ENCODE measurements at regions of chr18 and their contacts with region 1.

Region 1: DNA sequence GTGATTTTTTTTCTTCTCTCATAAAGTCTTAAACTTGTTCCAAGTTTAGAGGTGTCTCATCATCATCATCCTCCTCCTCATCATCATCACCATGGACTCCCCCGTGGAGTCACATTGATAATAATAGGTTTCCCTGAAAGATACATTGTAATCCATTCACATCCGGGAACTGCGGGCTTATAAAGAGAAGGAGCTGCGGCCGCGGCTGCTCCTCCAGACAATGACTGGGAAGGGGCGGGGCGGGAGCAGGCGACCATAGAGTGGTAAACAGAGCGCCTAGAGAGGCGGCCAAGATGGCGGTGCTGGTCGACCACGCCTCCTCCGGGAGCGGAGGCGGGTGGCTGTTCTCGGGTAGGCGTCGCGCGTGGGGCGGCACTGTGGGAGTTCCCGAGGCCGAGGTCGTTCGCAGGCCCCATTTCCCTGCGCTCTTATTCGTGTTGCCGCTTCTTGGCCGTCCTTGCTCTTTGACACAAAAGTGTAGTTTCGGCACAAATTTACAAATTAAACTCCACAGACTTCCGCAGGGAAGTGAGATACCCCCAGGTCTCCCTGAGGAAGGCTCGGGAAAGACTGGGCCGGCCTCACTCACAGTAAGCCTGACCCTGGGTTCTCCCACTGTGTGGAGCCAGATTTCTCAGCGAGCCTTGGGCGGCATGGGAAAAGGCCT is 1.8 kb upstream of the TCF4 start:
- DNase-seq: peak; percentile 95
- ATAC-seq: peak; percentile 87
- H3K4me3 ChIP-seq: peak overlapping the region; percentile 62 to 90 (median 71)
- H3K4me3 Mint-ChIP-seq: peak overlapping the region; percentile 89
- H3K27ac ChIP-seq: peak overlapping the region; percentile 77 to 82
- H3K27ac Mint-ChIP-seq: peak overlapping the region; percentile 92
- H3K4me1 ChIP-seq: peaks cover 20 to 21% of the 10 kb centered on the region in 2 donors
- H3K4me1 Mint-ChIP-seq: peaks cover 37% of the 10 kb centered on the region
- H3K27me3 ChIP-seq: peaks cover 0 to 6% (median 2%) of the 10 kb centered on the region in 4 experiments
- H3K27me3 Mint-ChIP-seq: peaks cover 15% of the 10 kb centered on the region
- CTCF ChIP-seq: no peak

Region 2: DNA sequence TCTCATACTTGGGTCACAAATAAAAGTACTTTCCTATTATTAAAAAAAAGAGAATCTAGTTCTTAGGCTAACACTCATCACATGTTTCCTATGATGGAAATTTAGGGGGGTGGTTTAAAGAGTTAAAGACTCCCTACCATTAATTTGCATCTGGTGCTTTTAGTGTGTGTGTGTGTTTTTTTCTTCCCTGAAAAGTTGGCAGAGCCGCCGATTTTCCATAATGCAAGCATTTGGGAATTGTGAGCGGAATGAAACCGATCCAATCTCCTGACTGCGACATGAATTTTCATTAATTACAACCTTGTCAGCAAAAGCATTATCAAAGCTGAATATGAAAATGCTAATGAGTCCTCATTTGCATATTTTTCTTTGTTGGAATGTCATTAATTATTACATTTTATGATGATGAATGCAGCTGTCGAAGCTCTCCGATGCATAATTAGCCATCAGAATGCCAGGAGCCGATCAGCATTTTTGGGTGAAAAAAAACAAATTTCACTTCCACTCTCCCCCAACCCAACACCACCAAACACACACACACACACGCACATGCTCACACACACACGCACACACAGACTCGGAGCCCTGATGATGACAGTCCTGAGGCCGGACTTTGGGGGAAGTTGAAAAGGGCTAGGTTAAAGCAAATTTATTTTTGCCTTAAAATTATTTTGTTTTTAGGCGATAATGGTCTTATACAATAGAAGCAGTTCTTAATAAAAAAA is 167.1 kb before region 1 on chr18:
- CTCF ChIA-PET with region 1: no interaction called
- POLR2A ChIA-PET with region 1: interaction called, 5 read pairs
- intact Hi-C with region 1: loop called (anchors 2 kb)
- DNase-seq: peak; percentile 58
- ATAC-seq: peak; percentile 22
- H3K4me3 ChIP-seq: peak overlapping the region in 4 of 5 experiments; percentile 32 to 59 (median 48)
- H3K4me3 Mint-ChIP-seq: peak overlapping the region; percentile 86
- H3K27ac ChIP-seq: peak overlapping the region in 1 of 2 donors; percentile 44
- H3K27ac Mint-ChIP-seq: peak overlapping the region; percentile 81
- H3K4me1 ChIP-seq: peaks cover 36 to 38% of the 10 kb centered on the region in 2 donors
- H3K4me1 Mint-ChIP-seq: peaks cover 54% of the 10 kb centered on the region
- H3K27me3 ChIP-seq: no peaks in the 10 kb centered on the region
- H3K27me3 Mint-ChIP-seq: peaks cover 14% of the 10 kb centered on the region
- CTCF ChIP-seq: no peak

Region 3: DNA sequence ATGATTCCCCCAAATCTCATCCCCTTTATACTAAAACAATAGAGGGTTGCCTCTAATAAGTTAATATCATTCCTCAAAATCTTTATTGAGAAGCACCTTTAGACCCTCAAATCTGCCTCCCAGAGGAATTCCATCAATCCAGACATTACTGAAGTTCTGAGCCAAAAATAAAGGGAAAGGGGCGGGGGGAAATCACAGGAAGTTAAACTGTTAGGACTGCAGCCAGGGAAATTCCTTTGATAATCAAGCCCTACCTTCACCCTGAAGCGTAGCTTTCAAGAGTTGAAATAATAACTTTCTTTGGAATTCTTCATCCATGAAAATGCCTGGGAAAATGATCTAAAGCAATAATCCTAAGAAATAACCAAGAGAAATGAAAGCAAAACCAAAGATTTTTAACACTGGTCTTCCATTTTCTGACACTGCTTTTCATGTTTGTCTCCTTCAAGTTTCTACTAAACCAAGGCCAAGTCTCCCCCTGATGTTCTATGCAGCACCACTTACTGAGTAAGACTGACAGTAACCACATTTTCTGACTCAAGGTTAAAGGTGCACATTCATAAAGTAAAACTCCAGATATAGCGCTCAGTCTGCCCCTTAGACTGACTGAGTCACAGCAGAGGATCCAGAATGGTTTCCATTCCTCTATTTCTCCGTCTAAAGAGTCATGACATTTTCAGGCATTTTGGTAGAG is 80.0 kb before region 1 on chr18:
- CTCF ChIA-PET with region 1: interaction called, 4 read pairs
- POLR2A ChIA-PET with region 1: no interaction called
- intact Hi-C with region 1: loop called (anchors 5 kb)
- DNase-seq: peak; percentile 49
- ATAC-seq: peak; percentile 22
- H3K4me3 ChIP-seq: peak overlapping the region; percentile 0 to 60 (median 43)
- H3K4me3 Mint-ChIP-seq: peak overlapping the region; percentile 82
- H3K27ac ChIP-seq: peak overlapping the region; percentile 65 to 85
- H3K27ac Mint-ChIP-seq: peak overlapping the region; percentile 89
- H3K4me1 ChIP-seq: peaks cover 24 to 27% of the 10 kb centered on the region in 2 donors
- H3K4me1 Mint-ChIP-seq: peaks cover 51% of the 10 kb centered on the region
- H3K27me3 ChIP-seq: no peaks in the 10 kb centered on the region
- H3K27me3 Mint-ChIP-seq: no peaks in the 10 kb centered on the region
- CTCF ChIP-seq: no peak

Region 4: GRCh38 chr18:55781481-55781957 is 191.8 kb after region 1 on chr18:
- CTCF ChIA-PET with region 1: no interaction called
- POLR2A ChIA-PET with region 1: interaction called, 3 read pairs
- intact Hi-C with region 1: loop called (anchors 1 kb)
- DNase-seq: peak; percentile 23
- ATAC-seq: no peak
- H3K4me3 ChIP-seq: no peak overlapping the region
- H3K4me3 Mint-ChIP-seq: peak overlapping the region; percentile 87
- H3K27ac ChIP-seq: peak overlapping the region in 1 of 2 donors; percentile 71
- H3K27ac Mint-ChIP-seq: peak overlapping the region; percentile 95
- H3K4me1 ChIP-seq: peaks cover 19 to 27% of the 10 kb centered on the region in 2 donors
- H3K4me1 Mint-ChIP-seq: peaks cover 36% of the 10 kb centered on the region
- H3K27me3 ChIP-seq: peaks cover 0 to 4% (median 0%) of the 10 kb centered on the region in 4 experiments
- H3K27me3 Mint-ChIP-seq: peaks cover 11% of the 10 kb centered on the region
- CTCF ChIP-seq: no peak

Region 5: GRCh38 chr18:56248610-56249235 is 659.0 kb after region 1 on chr18:
- CTCF ChIA-PET with region 1: no interaction called
- POLR2A ChIA-PET with region 1: interaction called, 5 read pairs
- intact Hi-C with region 1: loop called (anchors 5 kb)
- DNase-seq: peak; percentile 79
- ATAC-seq: peak; percentile 96
- H3K4me3 ChIP-seq: peak overlapping the region in 4 of 5 experiments; percentile 12 to 44 (median 14)
- H3K4me3 Mint-ChIP-seq: peak overlapping the region; percentile 60
- H3K27ac ChIP-seq: peak overlapping the region; percentile 56 to 77
- H3K27ac Mint-ChIP-seq: peak overlapping the region; percentile 82
- H3K4me1 ChIP-seq: peaks cover 35 to 52% of the 10 kb centered on the region in 2 donors
- H3K4me1 Mint-ChIP-seq: peaks cover 47% of the 10 kb centered on the region
- H3K27me3 ChIP-seq: no peaks in the 10 kb centered on the region
- H3K27me3 Mint-ChIP-seq: no peaks in the 10 kb centered on the region
- CTCF ChIP-seq: no peak

Region 6: GRCh38 chr18:56638271-56639093 is 1048.7 kb after region 1 on chr18 and contains the start of gene TXNL1:
- CTCF ChIA-PET with region 1: no interaction called
- POLR2A ChIA-PET with region 1: no interaction called
- intact Hi-C with region 1: loop called (anchors 5 kb)
- DNase-seq: peak; percentile 98
- ATAC-seq: peak; percentile 97
- H3K4me3 ChIP-seq: peak within 1 kb of the TSS; percentile 72 to 97 (median 89)
- H3K4me3 Mint-ChIP-seq: peak within 1 kb of the TSS; percentile 93
- H3K27ac ChIP-seq: peak within 1 kb of the TSS; percentile 92 to 94
- H3K27ac Mint-ChIP-seq: peak within 1 kb of the TSS; percentile 95
- H3K4me1 ChIP-seq: peaks cover 15 to 23% of the 10 kb centered on the region in 2 donors
- H3K4me1 Mint-ChIP-seq: peaks cover 46% of the 10 kb centered on the region
- H3K27me3 ChIP-seq: no peaks in the 10 kb centered on the region
- H3K27me3 Mint-ChIP-seq: no peaks in the 10 kb centered on the region
- CTCF ChIP-seq: no peak
- total RNA-seq, gene TXNL1: 39.8 and 45.4 TPM in 2 replicates